Breast epithelium (tissue), 4 donors: ENCODE measurements at regions of chr4 and their contacts with region 1.

Region 1: GRCh38 chr4:147633113-147633512 is 15.9 kb downstream of the TMEM184C start:
- DNase-seq: no peak
- H3K4me3 ChIP-seq: no peak overlapping the region
- H3K27ac ChIP-seq: no peak overlapping the region
- H3K4me1 ChIP-seq: no peaks in the 10 kb centered on the region
- H3K27me3 ChIP-seq: no peaks in the 10 kb centered on the region
- CTCF ChIP-seq: no peak
- POLR2A ChIP-seq: no peak

Region 2: GRCh38 chr4:147617173-147617840 is 15.8 kb before region 1 on chr4 and contains the start of gene TMEM184C:
- intact Hi-C with region 1: no loop called
- DNase-seq: peak; percentile 98 to 99
- H3K4me3 ChIP-seq: peak within 1 kb of the TSS; percentile 63 to 92 (median 87)
- H3K27ac ChIP-seq: peak within 1 kb of the TSS; percentile 86 to 91
- H3K4me1 ChIP-seq: peaks cover 0 to 17% of the 10 kb centered on the region in 2 donors
- H3K27me3 ChIP-seq: no peaks in the 10 kb centered on the region
- CTCF ChIP-seq: peak in 2 of 3 donors; percentile 10 to 30
- POLR2A ChIP-seq: peak; percentile 26
- total RNA-seq, gene TMEM184C: 21.0 to 32.2 (median 26.9) TPM

Region 3: GRCh38 chr4:148007303-148007702 is 374.2 kb after region 1 on chr4:
- intact Hi-C with region 1: loop called (anchors 5 kb)
- DNase-seq: no peak
- H3K4me3 ChIP-seq: no peak overlapping the region
- H3K27ac ChIP-seq: peak overlapping the region in 1 of 2 donors; percentile 7
- H3K4me1 ChIP-seq: no peaks in the 10 kb centered on the region
- H3K27me3 ChIP-seq: no peaks in the 10 kb centered on the region
- CTCF ChIP-seq: no peak
- POLR2A ChIP-seq: no peak

Region 4: DNA sequence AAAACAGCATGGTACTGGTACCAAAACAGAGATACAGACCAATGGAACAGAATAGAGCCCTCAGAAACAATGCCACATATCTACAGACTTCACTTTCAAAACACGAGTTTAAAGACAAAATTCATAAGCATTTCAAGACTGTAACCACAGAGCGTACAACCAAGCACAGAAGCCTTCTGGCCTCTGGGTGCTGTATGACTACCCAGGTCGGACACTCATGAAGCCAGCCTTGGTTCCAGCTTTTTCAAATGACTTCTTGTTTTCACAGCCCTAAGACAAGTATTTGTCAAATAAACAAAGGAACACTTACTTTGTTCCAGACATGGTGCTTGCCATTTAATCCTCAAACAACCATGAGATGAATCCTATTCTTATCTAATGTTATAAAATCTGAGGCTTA is 1345.2 kb after region 1 on chr4:
- intact Hi-C with region 1: loop called (anchors 10 kb)
- DNase-seq: no peak
- H3K4me3 ChIP-seq: no peak overlapping the region
- H3K27ac ChIP-seq: no peak overlapping the region
- H3K4me1 ChIP-seq: no peaks in the 10 kb centered on the region
- H3K27me3 ChIP-seq: no peaks in the 10 kb centered on the region
- CTCF ChIP-seq: no peak
- POLR2A ChIP-seq: no peak